Activated CD8-positive, alpha-beta T cell treated with anti-CD3 and anti-CD28 coated beads for 36 hours (primary cell): ENCODE measurements at regions of chr16 and their contacts with region 1.

Region 1: GRCh38 chr16:58336332-58337089 is 41.7 kb upstream of the PRSS54 start:
- DNase-seq: peak; percentile 95
- ATAC-seq: peak; percentile 98
- H3K4me3 Mint-ChIP-seq: peak overlapping the region; percentile 40
- H3K27ac Mint-ChIP-seq: no peak overlapping the region
- H3K4me1 Mint-ChIP-seq: peaks cover 6% of the 10 kb centered on the region
- H3K27me3 Mint-ChIP-seq: peaks cover 3% of the 10 kb centered on the region
- CTCF ChIP-seq: peak; percentile 82

Region 2: GRCh38 chr16:58025351-58026138 is 311.0 kb before region 1 on chr16 and contains the start of gene MMP15:
- CTCF ChIA-PET with region 1: no interaction called
- POLR2A ChIA-PET with region 1: no interaction called
- intact Hi-C with region 1: no loop called
- DNase-seq: peak; percentile 73
- ATAC-seq: peak; percentile 69
- H3K4me3 Mint-ChIP-seq: peak within 1 kb of the TSS; percentile 75
- H3K27ac Mint-ChIP-seq: peak within 1 kb of the TSS; percentile 72
- H3K4me1 Mint-ChIP-seq: peaks cover 11% of the 10 kb centered on the region
- H3K27me3 Mint-ChIP-seq: peaks cover 5% of the 10 kb centered on the region
- CTCF ChIP-seq: no peak
- total RNA-seq, gene MMP15: 0.25 to 0.63 TPM

Region 3: DNA sequence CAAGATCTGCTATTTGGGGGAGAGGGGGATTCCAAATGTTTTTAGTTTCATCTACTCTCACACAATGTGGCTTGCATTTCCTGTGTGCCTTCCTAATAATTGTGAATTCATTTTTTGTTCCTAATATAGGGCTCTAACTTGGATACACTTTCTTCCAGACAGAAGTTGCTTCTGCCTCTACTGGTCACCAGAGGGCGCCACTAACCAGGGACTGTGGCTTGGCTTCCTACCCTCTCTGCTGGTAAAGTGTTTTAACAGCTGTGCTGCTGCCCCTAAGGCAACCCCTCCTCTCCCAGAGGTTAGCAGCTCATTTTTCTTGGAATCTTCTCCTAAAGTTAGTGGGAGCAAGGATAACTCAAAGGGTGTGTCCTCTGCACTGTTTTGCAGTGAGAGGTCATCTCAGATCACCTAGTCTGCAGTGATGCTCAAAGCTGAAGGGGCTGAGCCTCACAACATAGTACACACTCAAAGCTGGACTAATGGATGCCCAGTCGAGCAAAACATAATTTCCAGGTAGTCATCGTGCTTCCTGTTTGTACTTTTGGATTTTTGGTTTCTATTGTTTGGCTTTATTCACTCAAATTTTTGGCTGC is 36.7 kb before region 1 on chr16:
- CTCF ChIA-PET with region 1: interaction called, 13 read pairs
- POLR2A ChIA-PET with region 1: no interaction called
- intact Hi-C with region 1: no loop called
- DNase-seq: peak; percentile 58
- ATAC-seq: no peak
- H3K4me3 Mint-ChIP-seq: no peak overlapping the region
- H3K27ac Mint-ChIP-seq: no peak overlapping the region
- H3K4me1 Mint-ChIP-seq: no peaks in the 10 kb centered on the region
- H3K27me3 Mint-ChIP-seq: peaks cover 6% of the 10 kb centered on the region
- CTCF ChIP-seq: peak; percentile 72

Region 4: GRCh38 chr16:58324792-58325191 is 11.7 kb before region 1 on chr16:
- CTCF ChIA-PET with region 1: interaction called, 29 read pairs
- POLR2A ChIA-PET with region 1: no interaction called
- intact Hi-C with region 1: no loop called
- DNase-seq: no peak
- ATAC-seq: no peak
- H3K4me3 Mint-ChIP-seq: no peak overlapping the region
- H3K27ac Mint-ChIP-seq: no peak overlapping the region
- H3K4me1 Mint-ChIP-seq: no peaks in the 10 kb centered on the region
- H3K27me3 Mint-ChIP-seq: peaks cover 16% of the 10 kb centered on the region
- CTCF ChIP-seq: no peak

Region 5: GRCh38 chr16:58375386-58375785 is 38.9 kb after region 1 on chr16:
- CTCF ChIA-PET with region 1: interaction called, 14 read pairs
- POLR2A ChIA-PET with region 1: no interaction called
- intact Hi-C with region 1: no loop called
- DNase-seq: no peak
- ATAC-seq: no peak
- H3K4me3 Mint-ChIP-seq: no peak overlapping the region
- H3K27ac Mint-ChIP-seq: no peak overlapping the region
- H3K4me1 Mint-ChIP-seq: no peaks in the 10 kb centered on the region
- H3K27me3 Mint-ChIP-seq: peaks cover 15% of the 10 kb centered on the region
- CTCF ChIP-seq: no peak

Region 6: DNA sequence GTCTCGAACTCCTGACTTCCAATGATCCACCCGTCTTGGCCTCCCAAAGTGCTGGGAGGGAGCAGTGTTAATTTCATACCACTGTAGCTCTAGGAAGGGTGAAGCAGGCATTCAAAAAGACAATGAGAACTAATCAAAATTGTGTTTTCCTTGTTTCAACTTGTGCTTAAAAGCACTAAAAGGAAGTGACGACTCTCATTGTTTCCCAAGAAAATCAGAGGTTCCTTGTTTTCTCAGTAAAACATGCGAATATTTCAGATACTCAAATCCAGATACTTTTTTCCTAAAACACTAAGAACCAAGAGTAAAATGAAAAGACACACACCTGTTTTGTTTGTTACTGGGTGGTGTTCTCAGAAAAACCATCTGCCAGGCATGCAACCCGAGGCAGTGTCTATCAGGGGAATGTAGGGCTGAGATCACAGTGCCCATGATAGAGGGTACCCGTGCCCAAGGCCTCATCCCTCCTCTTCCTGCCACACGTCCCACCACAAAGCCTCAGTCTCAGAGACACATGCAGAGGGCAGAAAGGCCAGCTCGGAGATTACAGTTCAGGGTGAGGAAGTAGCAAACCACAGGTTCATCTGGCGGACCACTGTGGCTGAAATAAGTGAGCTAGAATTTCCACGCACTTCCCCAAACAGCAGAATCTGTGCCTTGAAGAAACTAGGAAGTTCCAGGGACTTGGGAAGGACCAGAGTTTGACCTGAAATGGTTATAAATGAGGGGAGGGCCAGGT is 89.4 kb after region 1 on chr16:
- CTCF ChIA-PET with region 1: interaction called, 13 read pairs
- POLR2A ChIA-PET with region 1: no interaction called
- intact Hi-C with region 1: no loop called
- DNase-seq: peak; percentile 72
- ATAC-seq: peak; percentile 91
- H3K4me3 Mint-ChIP-seq: no peak overlapping the region
- H3K27ac Mint-ChIP-seq: no peak overlapping the region
- H3K4me1 Mint-ChIP-seq: peaks cover 17% of the 10 kb centered on the region
- H3K27me3 Mint-ChIP-seq: peaks cover 8% of the 10 kb centered on the region
- CTCF ChIP-seq: no peak

Region 7: DNA sequence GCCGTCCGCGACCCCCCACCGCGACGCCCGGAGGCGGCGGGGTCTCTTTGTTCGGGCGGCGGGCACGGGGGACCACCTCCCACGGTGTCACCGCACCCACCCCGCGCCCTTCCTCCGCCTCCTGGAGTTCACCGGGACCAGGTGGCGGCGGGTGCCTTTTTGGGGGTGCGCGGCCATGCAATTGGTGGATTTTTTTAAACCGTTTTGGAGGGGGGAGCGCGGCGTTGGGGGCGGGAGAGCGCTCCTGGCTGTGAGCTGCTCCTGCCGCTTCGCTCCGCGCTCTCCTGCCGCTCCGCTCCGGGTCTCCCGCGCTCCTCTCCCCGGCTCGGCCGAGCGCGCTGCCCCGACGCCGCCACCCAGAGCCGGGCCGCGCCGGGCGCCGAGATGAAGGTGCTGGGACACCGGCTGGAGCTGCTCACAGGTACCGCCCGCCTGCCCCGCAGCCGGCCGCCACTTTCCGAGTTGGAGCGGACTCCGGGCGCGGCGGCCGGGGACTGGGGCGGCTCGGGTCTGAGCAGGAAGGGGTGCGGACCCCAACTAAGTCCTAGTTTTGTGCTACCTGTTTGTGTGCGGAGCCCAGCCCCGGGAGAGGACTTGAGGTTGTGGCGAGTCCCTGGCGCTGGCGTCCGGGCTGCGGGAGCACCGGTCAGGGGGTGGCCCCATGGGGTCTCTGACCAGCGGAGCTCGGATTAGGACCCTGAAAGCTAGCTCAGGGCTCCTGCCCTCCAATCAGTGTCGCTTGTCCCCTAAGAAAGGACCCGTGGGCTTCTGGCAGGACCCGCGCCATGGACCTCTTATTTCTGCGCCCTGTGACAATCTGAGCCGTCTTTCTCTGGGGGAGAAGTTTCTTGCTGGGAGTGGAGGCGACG is 127.8 kb after region 1 on chr16:
- CTCF ChIA-PET with region 1: interaction called, 10 read pairs
- POLR2A ChIA-PET with region 1: no interaction called
- intact Hi-C with region 1: no loop called
- DNase-seq: no peak
- ATAC-seq: no peak
- H3K4me3 Mint-ChIP-seq: peak overlapping the region; percentile 3
- H3K27ac Mint-ChIP-seq: no peak overlapping the region
- H3K4me1 Mint-ChIP-seq: peaks cover 11% of the 10 kb centered on the region
- H3K27me3 Mint-ChIP-seq: peaks cover 46% of the 10 kb centered on the region
- CTCF ChIP-seq: no peak

Region 8: GRCh38 chr16:58755989-58756649 is 419.6 kb after region 1 on chr16:
- CTCF ChIA-PET with region 1: interaction called, 26 read pairs
- POLR2A ChIA-PET with region 1: no interaction called
- intact Hi-C with region 1: loop called (anchors 5 kb)
- DNase-seq: peak; percentile 91
- ATAC-seq: peak; percentile 99
- H3K4me3 Mint-ChIP-seq: peak overlapping the region; percentile 26
- H3K27ac Mint-ChIP-seq: peak overlapping the region; percentile 57
- H3K4me1 Mint-ChIP-seq: peaks cover 8% of the 10 kb centered on the region
- H3K27me3 Mint-ChIP-seq: no peaks in the 10 kb centered on the region
- CTCF ChIP-seq: peak; percentile 75